Activated CD8-positive, alpha-beta memory T cell treated with anti-CD3 and anti-CD28 coated beads, Interleukin-2, amount 10 ng/mL, durations not matched to agents 7 days and 5 days (primary cell): ENCODE measurements at regions of chr22 and their contacts with region 1.

Region 1: DNA sequence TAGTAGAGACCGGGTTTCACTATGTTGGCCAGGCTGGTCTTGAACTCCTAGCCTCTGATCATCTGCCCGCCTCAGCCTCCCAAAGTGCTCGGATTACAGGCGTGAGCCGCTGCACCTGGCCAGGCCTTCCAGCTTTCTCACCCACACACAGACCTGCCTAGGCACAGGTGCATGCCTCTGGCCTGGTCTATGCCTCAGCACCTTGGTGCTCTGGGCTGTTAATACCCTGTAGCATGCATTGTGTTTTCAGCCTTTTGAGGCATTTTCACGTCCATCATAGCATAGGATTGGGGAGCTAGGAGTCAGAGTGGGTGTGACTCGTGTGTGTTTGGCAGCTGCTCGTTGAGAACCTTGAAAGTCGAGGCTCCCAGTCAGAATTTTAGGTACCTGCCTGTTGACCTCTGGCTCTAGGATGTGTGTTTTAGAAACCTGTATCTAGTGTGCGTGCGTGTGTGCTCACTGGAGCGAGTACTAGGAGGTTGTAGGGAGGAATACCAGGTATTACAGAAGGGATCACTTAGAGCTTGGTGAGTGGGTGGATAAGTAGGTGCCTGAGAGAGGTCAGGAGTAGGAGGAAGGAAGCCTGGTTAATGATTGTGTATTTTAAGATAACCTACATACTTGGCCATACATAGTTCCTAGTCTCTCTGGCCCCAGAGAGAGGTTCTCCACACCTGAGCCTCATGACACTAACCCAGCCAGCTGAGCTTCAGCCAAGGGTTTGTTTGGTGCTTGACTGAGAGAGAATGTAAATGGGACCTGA is 20.0 kb downstream of the CRKL start:
- DNase-seq: no peak
- ATAC-seq: no peak
- H3K4me3 Mint-ChIP-seq: no peak overlapping the region
- H3K27ac Mint-ChIP-seq: no peak overlapping the region
- H3K4me1 Mint-ChIP-seq: peaks cover 35% of the 10 kb centered on the region
- H3K27me3 Mint-ChIP-seq: no peaks in the 10 kb centered on the region

Region 2: GRCh38 chr22:20922141-20922751 is 15.0 kb before region 1 on chr22:
- CTCF ChIA-PET with region 1: interaction called, 14 read pairs
- DNase-seq: no peak
- ATAC-seq: no peak
- H3K4me3 Mint-ChIP-seq: no peak overlapping the region
- H3K27ac Mint-ChIP-seq: no peak overlapping the region
- H3K4me1 Mint-ChIP-seq: peaks cover 42% of the 10 kb centered on the region
- H3K27me3 Mint-ChIP-seq: no peaks in the 10 kb centered on the region